ENCODE measurements at regions of chr6 and their contacts with region 1.

Region 1: GRCh38 chr6:123105561-123105960 is 109.5 kb downstream of the CLVS2 start:
- DNase-seq: no peak
- ATAC-seq: no peak
- H3K4me3 ChIP-seq: no peak overlapping the region
- H3K27ac ChIP-seq: no peak overlapping the region
- H3K4me1 ChIP-seq: no peaks in the 10 kb centered on the region
- H3K27me3 ChIP-seq: no peaks in the 10 kb centered on the region
- CTCF ChIP-seq: no peak
- POLR2A ChIP-seq: no peak

Region 2: GRCh38 chr6:123042401-123042800 is 63.2 kb before region 1 on chr6:
- intact Hi-C with region 1: no loop called
- DNase-seq: no peak
- ATAC-seq: no peak
- H3K4me3 ChIP-seq: no peak overlapping the region
- H3K27ac ChIP-seq: no peak overlapping the region
- H3K4me1 ChIP-seq: no peaks in the 10 kb centered on the region
- H3K27me3 ChIP-seq: no peaks in the 10 kb centered on the region
- CTCF ChIP-seq: no peak
- POLR2A ChIP-seq: no peak

Region 3: GRCh38 chr6:123053602-123054225 is 51.8 kb before region 1 on chr6:
- intact Hi-C with region 1: no loop called
- DNase-seq: no peak
- ATAC-seq: no peak
- H3K4me3 ChIP-seq: no peak overlapping the region
- H3K27ac ChIP-seq: no peak overlapping the region
- H3K4me1 ChIP-seq: no peaks in the 10 kb centered on the region
- H3K27me3 ChIP-seq: no peaks in the 10 kb centered on the region
- CTCF ChIP-seq: no peak
- POLR2A ChIP-seq: no peak

Region 4: GRCh38 chr6:123091896-123092271 is 13.7 kb before region 1 on chr6:
- intact Hi-C with region 1: loop called in 1 of 10 experiments (anchors 2 kb)
- DNase-seq: no peak
- ATAC-seq: no peak
- H3K4me3 ChIP-seq: no peak overlapping the region
- H3K27ac ChIP-seq: no peak overlapping the region
- H3K4me1 ChIP-seq: no peaks in the 10 kb centered on the region
- H3K27me3 ChIP-seq: no peaks in the 10 kb centered on the region
- CTCF ChIP-seq: no peak
- POLR2A ChIP-seq: no peak

Region 5: GRCh38 chr6:123159861-123160260 is 54.3 kb after region 1 on chr6:
- intact Hi-C with region 1: no loop called
- DNase-seq: no peak
- ATAC-seq: no peak
- H3K4me3 ChIP-seq: no peak overlapping the region
- H3K27ac ChIP-seq: no peak overlapping the region
- H3K4me1 ChIP-seq: no peaks in the 10 kb centered on the region
- H3K27me3 ChIP-seq: no peaks in the 10 kb centered on the region
- CTCF ChIP-seq: no peak
- POLR2A ChIP-seq: no peak

Measured in heart left ventricle (tissue), 16 donors.